ENCODE measurements at regions of chr5 and their contacts with region 1.

Region 1: DNA sequence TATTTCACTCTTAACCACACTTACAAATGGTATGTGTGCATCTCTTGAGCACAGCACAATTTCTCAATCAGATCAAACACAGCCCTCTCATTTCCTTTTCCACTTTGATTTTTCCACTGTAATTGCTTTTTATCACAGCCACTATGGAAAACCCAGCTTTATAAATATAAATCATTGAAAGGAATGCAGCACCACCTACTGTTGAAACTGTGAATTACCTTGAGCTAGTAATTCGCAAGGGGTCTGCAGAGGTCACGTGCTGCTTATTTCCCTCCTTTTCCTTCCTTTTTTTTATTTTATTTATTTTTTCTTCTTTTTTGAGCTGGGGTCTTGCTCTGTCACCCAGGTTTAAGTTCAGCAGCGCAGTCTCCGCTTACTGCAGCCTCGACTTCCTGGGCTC is 76.9 kb downstream of the CDH6 start:
- DNase-seq: no peak
- H3K4me3 ChIP-seq: no peak overlapping the region
- H3K27ac ChIP-seq: no peak overlapping the region
- H3K4me1 ChIP-seq: peaks cover 2% of the 10 kb centered on the region
- H3K27me3 ChIP-seq: no peaks in the 10 kb centered on the region
- CTCF ChIP-seq: no peak
- EP300 ChIP-seq: no peak
- POLR2A ChIP-seq: no peak

Region 2: GRCh38 chr5:30866142-30866541 is 404.3 kb before region 1 on chr5:
- intact Hi-C with region 1: no loop called
- DNase-seq: no peak
- H3K4me3 ChIP-seq: no peak overlapping the region
- H3K27ac ChIP-seq: no peak overlapping the region
- H3K4me1 ChIP-seq: no peaks in the 10 kb centered on the region
- H3K27me3 ChIP-seq: no peaks in the 10 kb centered on the region
- CTCF ChIP-seq: no peak
- EP300 ChIP-seq: no peak
- POLR2A ChIP-seq: no peak

Region 3: DNA sequence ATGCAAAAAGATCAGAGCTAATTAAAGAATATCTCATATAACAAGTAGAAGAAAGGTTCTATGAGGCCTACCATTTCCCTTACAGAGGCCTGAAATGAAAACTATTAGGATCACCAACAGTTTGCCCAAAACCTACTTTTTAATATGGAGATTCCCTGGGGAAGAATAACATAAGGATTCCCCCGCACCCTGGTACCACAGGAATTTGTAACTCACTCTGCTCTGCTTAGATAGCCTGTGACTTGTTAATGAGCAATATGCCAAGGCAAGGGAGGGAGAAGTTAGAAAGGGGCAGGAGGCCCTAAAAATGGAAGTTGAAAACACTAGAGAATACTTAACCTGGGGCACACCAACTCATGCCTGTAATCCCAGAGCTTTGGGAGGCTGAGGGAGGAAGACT is 30.1 kb after region 1 on chr5:
- intact Hi-C with region 1: loop called in 1 of 4 experiments (anchors 1 kb)
- DNase-seq: no peak
- H3K4me3 ChIP-seq: no peak overlapping the region
- H3K27ac ChIP-seq: no peak overlapping the region
- H3K4me1 ChIP-seq: no peaks in the 10 kb centered on the region
- H3K27me3 ChIP-seq: no peaks in the 10 kb centered on the region
- CTCF ChIP-seq: no peak
- EP300 ChIP-seq: no peak
- POLR2A ChIP-seq: no peak